OCI-LY7 (cell line): ENCODE measurements at regions of chr11 and their contacts with region 1.

Region 1: DNA sequence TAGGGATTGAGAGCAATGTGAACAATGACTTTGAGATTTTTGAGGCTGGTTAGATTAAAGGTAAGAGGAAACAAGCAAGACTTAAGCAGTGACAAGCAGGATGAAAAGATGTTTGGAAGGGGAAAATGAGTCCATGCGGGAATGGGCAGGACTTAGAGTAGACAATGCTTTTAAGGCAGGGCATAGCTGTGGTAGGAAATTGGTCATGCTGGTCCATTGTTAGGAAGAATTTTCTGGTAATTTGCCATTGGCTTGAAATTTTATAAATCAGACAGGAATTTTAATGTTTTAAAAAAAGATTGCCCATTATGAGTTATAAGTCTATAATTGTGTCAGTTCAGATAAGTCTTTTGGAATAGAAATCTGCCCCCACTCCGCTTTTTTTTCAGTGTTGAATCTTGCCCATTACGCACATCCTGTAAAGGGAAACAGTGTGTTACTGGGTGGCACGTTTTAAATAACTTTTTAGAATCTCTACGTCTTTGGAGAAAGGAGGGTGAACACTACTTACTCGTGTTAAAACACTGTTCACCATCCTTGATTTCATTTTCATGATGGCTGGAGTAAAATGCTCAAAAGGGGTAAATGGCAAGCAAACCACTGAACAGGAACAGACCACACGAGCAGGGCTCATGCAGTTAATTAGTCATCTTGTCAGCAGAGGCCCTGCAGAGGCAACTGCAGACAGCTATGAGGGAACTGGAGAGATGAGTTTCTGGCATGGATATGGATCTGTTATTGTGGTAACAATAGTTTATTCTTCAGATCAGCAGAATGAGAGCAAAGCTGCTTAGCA is 25.0 kb downstream of the SWAP70 start:
- DNase-seq: peak; percentile 87
- H3K4me3 ChIP-seq: peak overlapping the region; percentile 51
- H3K27ac ChIP-seq: peak overlapping the region; percentile 96
- H3K4me1 ChIP-seq: peaks cover 99% of the 10 kb centered on the region
- CTCF ChIP-seq: no peak

Region 2: GRCh38 chr11:9573052-9573774 is 115.7 kb before region 1 on chr11 and contains the start of gene WEE1:
- CTCF ChIA-PET with region 1: interaction called, 3 read pairs
- POLR2A ChIA-PET with region 1: interaction called, 14 read pairs
- intact Hi-C with region 1: loop called (anchors 5 kb)
- DNase-seq: peak; percentile 99
- H3K4me3 ChIP-seq: peak within 1 kb of the TSS; percentile 99
- H3K27ac ChIP-seq: peak within 1 kb of the TSS; percentile 78
- H3K4me1 ChIP-seq: peaks cover 54% of the 10 kb centered on the region
- CTCF ChIP-seq: no peak
- total RNA-seq, gene WEE1: 141 and 147 TPM in 2 replicates

Region 3: GRCh38 chr11:9601037-9601875 is 87.7 kb before region 1 on chr11:
- CTCF ChIA-PET with region 1: interaction called, 3 read pairs
- POLR2A ChIA-PET with region 1: interaction called, 28 read pairs
- intact Hi-C with region 1: loop called (anchors 5 kb)
- DNase-seq: peak; percentile 95
- H3K4me3 ChIP-seq: peak overlapping the region; percentile 74
- H3K27ac ChIP-seq: peak overlapping the region; percentile 99
- H3K4me1 ChIP-seq: peaks cover 96% of the 10 kb centered on the region
- CTCF ChIP-seq: no peak

Region 4: GRCh38 chr11:9716275-9717039 is 27.5 kb after region 1 on chr11:
- CTCF ChIA-PET with region 1: no interaction called
- POLR2A ChIA-PET with region 1: interaction called, 11 read pairs
- intact Hi-C with region 1: no loop called
- DNase-seq: peak; percentile 78
- H3K4me3 ChIP-seq: peak overlapping the region; percentile 3
- H3K27ac ChIP-seq: peak overlapping the region; percentile 41
- H3K4me1 ChIP-seq: peaks cover 54% of the 10 kb centered on the region
- CTCF ChIP-seq: no peak

Region 5: GRCh38 chr11:10314199-10315072 is 625.5 kb after region 1 on chr11:
- CTCF ChIA-PET with region 1: no interaction called
- POLR2A ChIA-PET with region 1: no interaction called
- intact Hi-C with region 1: loop called (anchors 10 kb)
- DNase-seq: peak; percentile 92
- H3K4me3 ChIP-seq: peak overlapping the region; percentile 50
- H3K27ac ChIP-seq: peak overlapping the region; percentile 93
- H3K4me1 ChIP-seq: peaks cover 96% of the 10 kb centered on the region
- CTCF ChIP-seq: no peak